ENCODE measurements at regions of chr3 and their contacts with region 1.

Region 1: GRCh38 chr3:15815696-15816095 is 17.9 kb upstream of the ANKRD28 start:
- DNase-seq: peak; percentile 68
- H3K4me3 Mint-ChIP-seq: no peak overlapping the region
- H3K27ac Mint-ChIP-seq: peak overlapping the region; percentile 27
- H3K4me1 Mint-ChIP-seq: peaks cover 18% of the 10 kb centered on the region
- H3K27me3 Mint-ChIP-seq: no peaks in the 10 kb centered on the region
- CTCF ChIP-seq: peak; percentile 43

Region 2: GRCh38 chr3:15629860-15630597 is 185.7 kb before region 1 on chr3:
- CTCF ChIA-PET with region 1: interaction called, 35 read pairs
- POLR2A ChIA-PET with region 1: interaction called, 5 read pairs
- intact Hi-C with region 1: loop called (anchors 1 kb)
- DNase-seq: peak; percentile 90
- H3K4me3 Mint-ChIP-seq: peak overlapping the region; percentile 50
- H3K27ac Mint-ChIP-seq: peak overlapping the region; percentile 67
- H3K4me1 Mint-ChIP-seq: peaks cover 35% of the 10 kb centered on the region
- H3K27me3 Mint-ChIP-seq: no peaks in the 10 kb centered on the region
- CTCF ChIP-seq: peak; percentile 72

Region 3: DNA sequence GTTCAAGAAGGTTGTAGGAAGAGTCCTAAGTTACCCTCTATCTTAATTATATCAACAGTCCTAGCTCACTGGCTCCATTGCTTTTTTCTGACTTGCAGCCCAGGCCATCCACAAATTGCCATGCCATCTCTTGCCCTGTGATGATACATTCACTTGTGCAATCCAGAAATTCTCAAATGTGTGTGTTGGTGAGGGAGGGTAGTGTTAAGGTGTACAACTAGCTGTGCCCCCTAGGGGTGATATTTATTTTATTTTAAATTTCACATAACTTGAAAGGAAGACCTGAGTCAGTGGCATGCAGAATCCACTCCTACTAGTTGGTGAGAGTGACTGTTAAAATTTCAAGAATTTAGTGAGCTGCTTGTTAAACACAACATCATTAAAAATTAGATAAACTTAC is 138.1 kb after region 1 on chr3:
- CTCF ChIA-PET with region 1: no interaction called
- POLR2A ChIA-PET with region 1: no interaction called
- intact Hi-C with region 1: loop called (anchors 5 kb)
- DNase-seq: peak; percentile 65
- H3K4me3 Mint-ChIP-seq: no peak overlapping the region
- H3K27ac Mint-ChIP-seq: no peak overlapping the region
- H3K4me1 Mint-ChIP-seq: no peaks in the 10 kb centered on the region
- H3K27me3 Mint-ChIP-seq: no peaks in the 10 kb centered on the region
- CTCF ChIP-seq: no peak

Region 4: GRCh38 chr3:16247276-16248061 is 431.8 kb after region 1 on chr3:
- CTCF ChIA-PET with region 1: interaction called, 6 read pairs
- POLR2A ChIA-PET with region 1: interaction called, 3 read pairs
- intact Hi-C with region 1: loop called (anchors 1 kb)
- DNase-seq: peak; percentile 89
- H3K4me3 Mint-ChIP-seq: no peak overlapping the region
- H3K27ac Mint-ChIP-seq: no peak overlapping the region
- H3K4me1 Mint-ChIP-seq: peaks cover 32% of the 10 kb centered on the region
- H3K27me3 Mint-ChIP-seq: no peaks in the 10 kb centered on the region
- CTCF ChIP-seq: peak; percentile 95

Measured in MCF 10A (cell line).